Activated B cell treated with CpG ODN at 0.5 μM for 24 hours (primary cell): ENCODE measurements at regions of chr21 and their contacts with region 1.

Region 1: GRCh38 chr21:28992526-28993292 is at the start of gene LTN1:
- DNase-seq: peak; percentile 95
- ATAC-seq: peak; percentile 95
- H3K4me3 Mint-ChIP-seq: peak within 1 kb of the TSS; percentile 96
- H3K27ac Mint-ChIP-seq: peak within 1 kb of the TSS; percentile 94
- H3K4me1 Mint-ChIP-seq: peaks cover 39% of the 10 kb centered on the region
- H3K27me3 Mint-ChIP-seq: no peaks in the 10 kb centered on the region
- CTCF ChIP-seq: no peak
- total RNA-seq, gene LTN1: 22.5 and 25.8 TPM in 2 replicates

Region 2: DNA sequence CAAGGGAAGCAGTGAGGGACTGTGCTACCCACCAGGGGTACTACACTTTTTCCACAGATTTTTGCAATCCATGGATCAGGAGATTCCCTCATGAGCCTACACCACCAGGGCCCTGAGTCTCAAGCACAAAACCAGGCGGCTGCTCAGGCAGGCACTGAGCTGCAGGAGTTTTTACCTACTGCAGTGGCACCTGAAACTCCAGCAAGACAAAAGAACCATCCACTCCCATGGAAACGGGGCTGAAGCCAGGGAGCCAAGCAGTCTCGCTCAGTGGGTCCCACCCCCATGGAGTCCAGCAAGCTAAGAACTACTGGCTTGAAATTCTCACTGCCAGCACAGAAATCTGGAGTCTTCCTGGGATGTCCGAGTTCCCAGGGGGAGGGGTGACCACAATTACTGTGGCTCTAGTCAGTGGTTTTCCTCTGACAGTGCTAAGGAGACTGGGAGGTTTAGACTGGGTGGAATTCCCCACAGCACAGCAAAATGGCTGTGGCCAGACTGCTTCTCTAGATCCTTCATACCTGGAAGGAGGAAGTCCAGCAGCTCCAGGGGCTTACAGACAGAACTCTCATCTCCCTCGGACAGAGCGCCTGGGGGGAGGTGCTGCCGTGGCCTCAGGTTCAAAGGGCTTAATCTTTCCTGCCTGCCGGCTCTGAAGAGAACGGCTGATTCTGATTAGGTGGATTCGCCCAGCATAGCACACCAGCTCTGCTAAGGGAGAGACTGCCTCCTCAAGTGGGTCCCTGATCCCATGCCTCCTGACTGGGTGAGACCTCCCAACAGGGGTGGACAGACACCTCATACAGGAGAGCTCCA is 437.8 kb before region 1 on chr21:
- CTCF ChIA-PET with region 1: no interaction called
- POLR2A ChIA-PET with region 1: no interaction called
- intact Hi-C with region 1: no loop called
- DNase-seq: no peak
- ATAC-seq: no peak
- H3K4me3 Mint-ChIP-seq: no peak overlapping the region
- H3K27ac Mint-ChIP-seq: no peak overlapping the region
- H3K4me1 Mint-ChIP-seq: no peaks in the 10 kb centered on the region
- H3K27me3 Mint-ChIP-seq: no peaks in the 10 kb centered on the region
- CTCF ChIP-seq: no peak

Region 3: DNA sequence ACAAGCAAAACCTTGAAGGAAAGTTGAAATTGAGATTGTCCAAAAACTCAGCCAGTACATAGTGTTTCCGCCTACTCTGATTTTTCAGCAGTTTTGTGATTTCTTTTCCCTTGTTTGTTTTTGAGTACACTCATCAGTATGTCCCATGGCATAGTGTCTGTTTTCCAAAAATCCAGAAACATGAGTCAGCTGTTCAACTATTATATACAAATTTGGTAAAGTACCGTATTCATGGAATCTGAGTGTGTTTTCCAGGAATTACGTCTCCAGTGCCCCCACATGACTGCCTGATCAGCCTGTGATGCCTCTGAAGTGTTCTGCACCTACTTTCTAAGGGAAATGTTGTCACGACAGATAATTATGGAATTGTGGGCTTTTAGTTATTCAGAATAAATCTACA is 186.8 kb before region 1 on chr21:
- CTCF ChIA-PET with region 1: no interaction called
- POLR2A ChIA-PET with region 1: no interaction called
- intact Hi-C with region 1: no loop called
- DNase-seq: no peak
- ATAC-seq: no peak
- H3K4me3 Mint-ChIP-seq: no peak overlapping the region
- H3K27ac Mint-ChIP-seq: no peak overlapping the region
- H3K4me1 Mint-ChIP-seq: no peaks in the 10 kb centered on the region
- H3K27me3 Mint-ChIP-seq: no peaks in the 10 kb centered on the region
- CTCF ChIP-seq: no peak

Region 4: DNA sequence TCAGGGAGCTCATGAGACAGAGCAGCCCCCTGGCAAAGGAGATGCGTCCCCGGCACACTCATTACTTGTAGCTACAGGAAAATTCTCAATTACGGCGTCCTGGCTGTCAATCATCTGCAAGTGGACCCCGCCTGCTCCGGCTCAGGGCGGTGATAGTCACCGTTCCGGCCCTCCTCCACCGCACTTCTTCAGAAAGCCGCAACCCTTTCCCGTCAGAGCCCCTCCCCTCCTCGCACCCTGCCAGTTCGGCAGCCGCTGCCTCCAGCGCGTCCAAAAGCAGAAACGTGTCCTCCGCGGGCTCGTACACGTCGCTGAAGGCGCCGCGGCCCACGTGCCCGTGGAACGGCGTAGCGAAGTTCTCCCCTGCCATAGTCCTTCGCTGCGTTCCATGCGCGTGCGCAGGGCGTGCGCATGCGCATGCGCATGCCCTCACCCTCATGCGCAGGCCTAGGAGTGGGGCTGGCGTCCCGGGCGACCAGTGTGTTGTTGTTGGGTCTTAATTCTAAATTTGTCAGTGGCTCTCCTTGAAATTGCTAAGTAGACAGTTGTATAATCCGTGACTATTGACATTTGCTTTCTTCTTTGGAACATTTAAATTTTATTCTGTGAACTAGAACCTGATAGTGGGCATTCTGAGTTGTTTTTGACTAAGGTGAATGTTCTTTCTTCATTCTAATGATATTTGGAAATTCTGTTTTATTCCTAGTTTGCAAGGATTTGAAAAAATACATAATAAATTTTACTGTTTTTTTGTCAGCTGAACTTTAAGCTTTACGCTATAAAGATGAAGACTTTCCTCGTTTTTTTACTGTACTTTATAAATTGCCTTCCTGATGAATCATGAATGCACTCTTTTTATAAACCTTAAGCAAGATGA is 107.5 kb before region 1 on chr21:
- CTCF ChIA-PET with region 1: no interaction called
- POLR2A ChIA-PET with region 1: interaction called, 6 read pairs
- intact Hi-C with region 1: loop called (anchors 1 kb)
- DNase-seq: peak; percentile 88
- ATAC-seq: peak; percentile 95
- H3K4me3 Mint-ChIP-seq: peak overlapping the region; percentile 88
- H3K27ac Mint-ChIP-seq: peak overlapping the region; percentile 93
- H3K4me1 Mint-ChIP-seq: peaks cover 20% of the 10 kb centered on the region
- H3K27me3 Mint-ChIP-seq: peaks cover 7% of the 10 kb centered on the region
- CTCF ChIP-seq: no peak

Region 5: DNA sequence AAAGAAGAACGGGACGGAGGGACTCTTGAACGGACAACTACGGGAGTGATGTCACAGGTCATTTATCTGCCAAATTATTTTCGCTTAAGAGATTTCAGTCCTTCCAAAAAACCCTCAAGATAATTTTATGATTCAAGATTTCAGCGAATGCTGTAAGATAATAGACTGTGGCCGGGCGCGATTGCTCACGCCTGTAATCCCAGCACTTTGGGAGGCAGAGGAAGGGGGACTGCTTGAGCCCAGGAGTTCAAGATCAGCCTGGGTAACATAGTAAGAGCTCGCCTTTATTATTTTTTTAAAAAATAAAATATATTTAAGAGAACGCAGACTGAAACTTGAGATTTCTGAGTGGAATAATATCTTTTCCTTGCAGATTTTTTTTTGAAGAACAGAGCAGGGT is 25.8 kb after region 1 on chr21:
- CTCF ChIA-PET with region 1: no interaction called
- POLR2A ChIA-PET with region 1: interaction called, 94 read pairs
- intact Hi-C with region 1: loop called (anchors 1 kb)
- DNase-seq: no peak
- ATAC-seq: peak; percentile 17
- H3K4me3 Mint-ChIP-seq: peak overlapping the region; percentile 92
- H3K27ac Mint-ChIP-seq: peak overlapping the region; percentile 94
- H3K4me1 Mint-ChIP-seq: peaks cover 29% of the 10 kb centered on the region
- H3K27me3 Mint-ChIP-seq: no peaks in the 10 kb centered on the region
- CTCF ChIP-seq: no peak

Region 6: GRCh38 chr21:29024474-29025327 is 32.0 kb after region 1 on chr21 and contains the start of gene USP16:
- CTCF ChIA-PET with region 1: interaction called, 5 read pairs
- POLR2A ChIA-PET with region 1: interaction called, 94 read pairs
- intact Hi-C with region 1: loop called (anchors 1 kb)
- DNase-seq: peak; percentile 94
- ATAC-seq: peak; percentile 93
- H3K4me3 Mint-ChIP-seq: peak within 1 kb of the TSS; percentile 98
- H3K27ac Mint-ChIP-seq: peak within 1 kb of the TSS; percentile 98
- H3K4me1 Mint-ChIP-seq: peaks cover 45% of the 10 kb centered on the region
- H3K27me3 Mint-ChIP-seq: no peaks in the 10 kb centered on the region
- CTCF ChIP-seq: no peak
- total RNA-seq, gene USP16: 53.2 and 54.6 TPM in 2 replicates

Region 7: DNA sequence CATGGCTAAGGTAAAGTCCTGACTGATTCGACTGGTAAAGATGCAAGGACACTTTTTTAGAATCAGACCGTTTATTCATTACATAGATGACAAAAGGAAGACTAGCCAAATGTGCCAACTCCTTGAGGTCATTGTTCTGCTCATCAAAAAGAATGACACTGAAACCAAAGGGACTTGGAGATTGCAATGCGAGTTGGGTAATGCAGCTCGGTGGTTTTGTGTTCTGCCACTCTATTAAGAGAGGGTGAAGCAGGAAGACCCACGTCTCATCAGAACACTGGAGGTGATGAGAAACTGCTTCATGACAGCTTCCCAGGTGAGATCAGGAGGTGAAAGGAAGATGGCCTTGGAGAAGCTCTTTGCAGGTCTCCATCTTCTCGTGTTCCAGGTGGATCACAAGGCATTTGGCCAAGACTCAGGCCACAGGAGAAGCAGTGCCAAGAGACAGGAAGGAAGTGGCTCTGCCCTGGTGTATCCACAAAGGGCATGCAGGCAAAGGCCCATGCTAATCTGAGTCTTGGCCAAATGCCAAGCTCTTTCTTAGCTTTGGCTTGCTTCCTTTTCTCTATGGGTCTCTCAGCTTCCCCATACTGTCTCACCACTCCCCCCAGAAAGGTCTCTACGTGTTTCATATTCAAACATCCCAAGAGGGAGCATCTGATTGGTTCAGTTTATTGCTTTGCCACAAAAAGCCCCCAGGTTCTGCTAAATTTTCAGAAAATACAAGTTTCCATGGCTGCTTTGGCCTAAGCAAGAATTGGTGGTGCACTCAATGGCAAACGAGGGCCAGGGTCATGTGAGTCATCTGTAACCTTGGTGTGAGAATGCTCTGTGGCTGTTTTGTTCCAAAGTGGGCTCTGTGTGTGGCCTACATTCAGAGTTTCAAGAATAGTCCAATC is 86.4 kb after region 1 on chr21:
- CTCF ChIA-PET with region 1: no interaction called
- POLR2A ChIA-PET with region 1: interaction called, 20 read pairs
- intact Hi-C with region 1: no loop called
- DNase-seq: peak; percentile 18
- ATAC-seq: peak; percentile 51
- H3K4me3 Mint-ChIP-seq: peak overlapping the region; percentile 28
- H3K27ac Mint-ChIP-seq: peak overlapping the region; percentile 82
- H3K4me1 Mint-ChIP-seq: peaks cover 49% of the 10 kb centered on the region
- H3K27me3 Mint-ChIP-seq: no peaks in the 10 kb centered on the region
- CTCF ChIP-seq: no peak

Region 8: GRCh38 chr21:29096218-29097015 is 103.7 kb after region 1 on chr21:
- CTCF ChIA-PET with region 1: no interaction called
- POLR2A ChIA-PET with region 1: interaction called, 11 read pairs
- intact Hi-C with region 1: no loop called
- DNase-seq: no peak
- ATAC-seq: no peak
- H3K4me3 Mint-ChIP-seq: no peak overlapping the region
- H3K27ac Mint-ChIP-seq: no peak overlapping the region
- H3K4me1 Mint-ChIP-seq: peaks cover 11% of the 10 kb centered on the region
- H3K27me3 Mint-ChIP-seq: no peaks in the 10 kb centered on the region
- CTCF ChIP-seq: no peak

Region 9: DNA sequence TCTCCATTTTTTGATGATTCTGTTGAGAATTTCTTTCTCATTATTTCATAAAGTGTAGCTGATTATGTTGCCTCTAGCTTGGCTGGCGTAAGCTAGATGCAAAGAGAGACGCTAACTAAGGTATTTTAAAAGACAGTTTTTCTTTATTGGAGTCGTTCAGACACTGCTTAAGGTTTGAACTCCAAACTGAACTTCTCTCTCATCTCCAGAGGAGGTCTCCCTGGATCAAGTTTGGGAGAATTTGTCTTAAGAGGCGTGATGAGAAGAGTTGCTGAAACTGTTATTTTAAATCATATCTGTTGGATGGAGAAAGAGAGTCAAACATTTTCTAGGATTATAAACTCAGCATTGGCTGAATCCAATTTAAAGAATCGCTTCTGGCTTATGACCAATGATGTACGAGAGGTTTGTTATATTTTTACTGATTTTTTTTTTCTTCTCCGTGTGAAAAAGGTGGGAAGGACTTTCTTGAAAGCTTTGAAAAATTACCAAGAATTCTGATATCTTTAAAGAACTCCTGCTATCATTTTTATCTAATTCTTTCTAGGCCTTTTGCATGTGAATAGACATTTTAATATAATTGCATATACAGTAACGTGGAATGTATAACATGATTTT is 171.7 kb after region 1 on chr21:
- CTCF ChIA-PET with region 1: no interaction called
- POLR2A ChIA-PET with region 1: interaction called, 10 read pairs
- intact Hi-C with region 1: no loop called
- DNase-seq: no peak
- ATAC-seq: peak; percentile 57
- H3K4me3 Mint-ChIP-seq: no peak overlapping the region
- H3K27ac Mint-ChIP-seq: no peak overlapping the region
- H3K4me1 Mint-ChIP-seq: peaks cover 7% of the 10 kb centered on the region
- H3K27me3 Mint-ChIP-seq: no peaks in the 10 kb centered on the region
- CTCF ChIP-seq: no peak